Ascending aorta (tissue), 2 donors: ENCODE measurements at regions of chr19 and their contacts with region 1.

Region 1: DNA sequence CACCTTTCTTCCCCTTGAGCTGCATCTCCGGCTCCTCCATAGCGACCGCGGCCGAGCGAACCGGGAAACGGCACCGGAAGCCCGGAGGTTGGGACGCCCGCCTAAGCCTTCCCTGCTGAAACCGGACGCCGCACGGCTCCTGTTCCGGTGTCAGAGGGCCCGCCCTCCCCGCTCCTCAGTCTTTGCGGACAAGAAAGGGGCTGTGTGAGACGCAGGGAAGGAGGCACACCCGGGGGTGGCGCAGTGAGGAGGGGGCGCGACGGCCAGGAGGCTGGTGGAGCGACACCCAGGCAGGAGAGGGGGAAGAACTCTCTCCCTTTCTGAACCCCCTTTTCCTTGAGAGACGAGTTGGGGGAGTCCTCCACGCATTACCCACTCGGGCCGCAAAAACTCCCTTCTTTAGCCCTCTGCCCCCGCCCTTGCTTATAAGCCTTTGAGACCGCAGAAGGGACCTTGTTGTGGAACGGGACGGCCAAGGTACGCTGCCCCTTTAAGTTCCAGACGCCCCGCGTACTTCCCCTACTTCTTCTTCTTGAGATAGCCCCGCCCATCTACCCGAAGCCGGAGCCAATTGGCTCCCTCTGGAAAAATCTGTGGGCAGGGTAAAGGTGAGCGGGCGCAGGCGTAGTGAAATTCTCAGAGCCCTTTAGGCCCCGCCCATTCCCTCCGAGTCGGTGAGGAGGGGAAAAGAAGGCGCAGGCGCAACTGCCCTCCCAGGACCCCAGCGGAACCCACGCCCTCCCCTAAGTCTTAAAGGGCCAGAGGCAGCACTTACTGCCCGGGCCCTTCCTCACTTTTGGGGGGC is at the starts of genes BORCS8 and RFXANK:
- DNase-seq: peak; percentile 94 to 100
- H3K4me3 ChIP-seq: peak within 1 kb of the TSS; percentile 86 to 93
- H3K27ac ChIP-seq: peak within 1 kb of the TSS; percentile 97 to 99
- H3K4me1 ChIP-seq: peaks cover 26 to 33% of the 10 kb centered on the region in 2 donors
- H3K27me3 ChIP-seq: no peaks in the 10 kb centered on the region
- CTCF ChIP-seq: no peak
- total RNA-seq, gene BORCS8: 26.9 TPM
- total RNA-seq, gene RFXANK: 20.2 TPM

Region 2: DNA sequence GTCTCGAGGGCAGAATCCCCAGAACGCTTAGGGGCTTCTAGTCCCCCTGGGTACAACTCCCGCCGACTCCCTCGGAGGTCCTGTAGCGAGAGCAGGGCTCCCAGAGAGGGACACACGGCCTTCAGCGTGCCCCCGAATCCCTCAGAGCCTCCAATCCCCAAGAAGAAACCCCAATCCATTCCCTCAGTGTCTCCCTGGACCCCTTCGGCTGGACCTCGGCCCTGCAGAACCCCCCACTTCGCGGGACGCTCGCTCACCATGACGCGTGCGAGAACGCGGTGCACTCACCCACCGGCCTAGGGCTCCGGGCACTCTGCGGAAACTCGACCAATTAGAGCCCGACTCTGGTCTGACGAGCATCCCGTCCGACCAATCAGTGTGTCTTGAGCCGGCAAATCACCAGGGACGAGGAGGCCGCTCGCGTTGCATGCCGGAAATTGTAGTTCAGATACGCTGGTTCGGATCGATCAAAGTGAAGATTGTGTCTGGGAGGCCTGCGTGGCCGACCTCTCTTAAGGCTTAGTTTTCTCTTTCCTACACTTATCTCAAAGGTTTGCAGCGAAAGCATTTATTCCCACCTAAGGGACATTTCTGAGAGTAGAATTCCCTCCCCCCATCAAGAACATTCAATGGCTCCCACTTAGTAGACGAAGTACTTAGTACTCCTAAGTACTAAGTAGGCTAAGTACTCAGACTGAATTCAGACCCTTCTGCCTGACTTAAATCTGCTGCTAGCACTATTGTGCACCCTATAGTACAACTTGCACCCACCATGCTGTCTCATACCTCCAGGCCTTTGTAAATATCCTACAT is 53.9 kb before region 1 on chr19 and contains the start of gene TMEM161A:
- intact Hi-C with region 1: loop called (anchors 2 kb)
- DNase-seq: peak; percentile 94 to 98
- H3K4me3 ChIP-seq: peak within 1 kb of the TSS; percentile 56 to 77
- H3K27ac ChIP-seq: no peak within 1 kb of the TSS
- H3K4me1 ChIP-seq: peaks cover 0 to 8% of the 10 kb centered on the region in 2 donors
- H3K27me3 ChIP-seq: no peaks in the 10 kb centered on the region
- CTCF ChIP-seq: no peak
- total RNA-seq, gene TMEM161A: 14.5 TPM

Region 3: GRCh38 chr19:19214892-19215291 is 22.6 kb after region 1 on chr19:
- intact Hi-C with region 1: no loop called
- DNase-seq: no peak
- H3K4me3 ChIP-seq: no peak overlapping the region
- H3K27ac ChIP-seq: no peak overlapping the region
- H3K4me1 ChIP-seq: no peaks in the 10 kb centered on the region
- H3K27me3 ChIP-seq: peaks cover 3% of the 10 kb centered on the region
- CTCF ChIP-seq: no peak

Region 4: DNA sequence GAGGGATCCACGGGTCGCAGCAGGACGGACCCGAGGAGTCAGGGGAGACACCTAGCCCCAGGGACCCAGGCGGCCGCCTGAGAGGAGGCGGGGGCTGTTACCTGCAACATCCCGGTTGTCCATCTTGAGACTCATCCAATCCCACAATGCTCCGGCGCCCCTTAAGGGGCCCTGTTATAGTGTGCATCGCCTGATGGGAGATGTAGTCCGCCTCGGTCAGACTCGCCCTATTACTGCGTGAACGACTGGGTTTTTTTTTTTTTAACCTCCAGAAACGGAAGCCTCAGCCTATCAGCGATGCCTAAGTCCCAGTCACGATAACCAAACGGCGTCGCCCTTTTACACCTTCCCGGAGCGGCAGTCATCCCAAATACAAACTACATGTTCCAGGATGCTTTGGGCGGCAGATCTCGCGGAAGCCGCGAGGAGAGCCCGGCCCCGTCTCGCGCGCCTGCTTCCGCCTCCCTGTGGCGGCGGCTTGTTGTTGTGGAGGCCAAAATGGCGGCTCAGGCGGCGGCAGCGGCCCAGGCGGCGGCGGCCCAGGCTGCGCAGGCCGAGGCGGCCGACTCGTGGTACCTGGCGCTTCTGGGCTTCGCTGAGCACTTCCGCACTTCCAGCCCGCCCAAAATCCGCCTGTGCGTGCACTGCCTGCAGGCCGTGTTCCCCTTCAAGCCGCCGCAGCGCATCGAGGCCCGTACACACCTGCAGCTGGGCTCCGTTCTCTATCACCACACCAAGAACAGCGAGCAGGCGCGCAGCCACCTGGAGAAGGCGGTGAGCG is 128.3 kb after region 1 on chr19 and contains the starts of genes MAU2 and SUGP1:
- intact Hi-C with region 1: loop called (anchors 2 kb)
- DNase-seq: peak; percentile 65 to 94
- H3K4me3 ChIP-seq: peak within 1 kb of the TSS; percentile 76 to 88
- H3K27ac ChIP-seq: peak within 1 kb of the TSS; percentile 80 to 86
- H3K4me1 ChIP-seq: peaks cover 7 to 20% of the 10 kb centered on the region in 2 donors
- H3K27me3 ChIP-seq: no peaks in the 10 kb centered on the region
- CTCF ChIP-seq: peak; percentile 28 to 56 (median 53)
- total RNA-seq, gene MAU2: 41.2 TPM
- total RNA-seq, gene SUGP1: 42.9 TPM

Region 5: GRCh38 chr19:19488875-19489690 is 296.8 kb after region 1 on chr19:
- intact Hi-C with region 1: loop called (anchors 10 kb)
- DNase-seq: peak; percentile 76 to 93
- H3K4me3 ChIP-seq: peak overlapping the region; percentile 13 to 41
- H3K27ac ChIP-seq: peak overlapping the region; percentile 86 to 96
- H3K4me1 ChIP-seq: peaks cover 15 to 28% of the 10 kb centered on the region in 2 donors
- H3K27me3 ChIP-seq: no peaks in the 10 kb centered on the region
- CTCF ChIP-seq: no peak

Region 6: GRCh38 chr19:19562665-19563347 is 370.5 kb after region 1 on chr19:
- intact Hi-C with region 1: no loop called
- DNase-seq: no peak
- H3K4me3 ChIP-seq: no peak overlapping the region
- H3K27ac ChIP-seq: no peak overlapping the region
- H3K4me1 ChIP-seq: no peaks in the 10 kb centered on the region
- H3K27me3 ChIP-seq: no peaks in the 10 kb centered on the region
- CTCF ChIP-seq: no peak